Heart right ventricle (tissue), 16 donors: ENCODE measurements at regions of chr12 and their contacts with region 1.

Region 1: GRCh38 chr12:57005980-57006808 is at the start of gene ZBTB39:
- DNase-seq: peak; percentile 32 to 69
- ATAC-seq: peak; percentile 64 to 89 (median 74)
- H3K4me3 ChIP-seq: peak within 1 kb of the TSS; percentile 84 to 97 (median 92)
- H3K27ac ChIP-seq: peak within 1 kb of the TSS; percentile 50 to 92 (median 88)
- H3K4me1 ChIP-seq: peaks cover 0 to 33% (median 27%) of the 10 kb centered on the region in 9 donors
- H3K27me3 ChIP-seq: no peaks in the 10 kb centered on the region
- CTCF ChIP-seq: peak; percentile 24 to 75 (median 61)
- total RNA-seq, gene ZBTB39: 2.7 to 4.3 (median 3.6) TPM

Region 2: DNA sequence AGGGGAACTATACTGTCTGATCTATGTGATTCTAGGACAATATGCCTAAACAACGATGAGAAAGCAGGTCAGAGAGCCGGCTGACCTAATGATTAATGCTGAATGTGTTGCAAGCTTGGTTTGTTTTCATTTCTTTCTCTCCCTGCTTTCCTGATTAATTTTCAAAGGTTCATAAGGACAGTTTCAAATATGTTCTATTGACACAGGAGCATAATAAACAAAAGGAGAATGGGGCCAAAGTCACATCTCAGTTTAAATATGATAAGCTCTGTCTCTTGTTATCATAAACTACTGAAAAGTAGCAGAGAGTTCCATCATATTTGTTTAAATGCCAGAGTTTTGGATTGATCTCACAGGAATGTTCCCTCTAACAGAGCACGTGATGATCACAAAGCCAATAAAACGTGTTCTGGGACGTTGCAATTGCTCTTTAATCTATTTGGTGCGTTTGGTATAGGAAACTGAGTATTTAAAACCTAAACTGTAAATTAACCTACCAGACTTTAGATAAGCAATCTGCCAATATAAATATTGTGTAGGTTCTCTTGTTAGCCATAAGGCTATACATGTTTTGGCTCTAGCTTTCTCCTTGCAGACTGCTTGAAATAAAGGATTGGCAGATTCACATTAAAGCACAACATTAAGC is 246.8 kb before region 1 on chr12:
- intact Hi-C with region 1: loop called in 5 of 10 experiments (anchors 5 kb)
- DNase-seq: no peak
- ATAC-seq: no peak
- H3K4me3 ChIP-seq: no peak overlapping the region
- H3K27ac ChIP-seq: no peak overlapping the region
- H3K4me1 ChIP-seq: no peaks in the 10 kb centered on the region
- H3K27me3 ChIP-seq: no peaks in the 10 kb centered on the region
- CTCF ChIP-seq: no peak

Region 3: DNA sequence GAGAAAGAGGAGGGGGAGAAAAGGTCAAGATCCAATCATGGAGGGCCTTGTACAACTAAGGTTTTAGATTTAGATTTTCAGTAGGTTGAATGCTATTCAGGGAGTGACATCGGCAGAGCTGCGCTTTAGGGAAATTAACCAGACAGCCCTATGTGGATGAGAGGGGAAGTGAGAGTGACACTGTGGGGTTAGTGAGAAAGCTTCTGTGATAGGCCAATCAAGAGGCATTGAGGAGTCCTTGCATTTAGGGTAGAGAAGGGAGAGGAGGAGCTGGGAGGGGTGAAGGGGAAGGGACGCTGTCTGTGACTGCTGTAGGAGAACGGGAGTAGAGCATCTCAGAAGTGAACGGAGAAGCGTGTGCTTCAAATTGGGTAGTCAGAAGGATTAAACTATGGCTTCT is 239.7 kb before region 1 on chr12:
- intact Hi-C with region 1: loop called in 1 of 10 experiments (anchors 5 kb)
- DNase-seq: no peak
- ATAC-seq: peak in 2 of 8 donors; percentile 39 to 74
- H3K4me3 ChIP-seq: no peak overlapping the region
- H3K27ac ChIP-seq: no peak overlapping the region
- H3K4me1 ChIP-seq: no peaks in the 10 kb centered on the region
- H3K27me3 ChIP-seq: no peaks in the 10 kb centered on the region
- CTCF ChIP-seq: no peak

Region 4: DNA sequence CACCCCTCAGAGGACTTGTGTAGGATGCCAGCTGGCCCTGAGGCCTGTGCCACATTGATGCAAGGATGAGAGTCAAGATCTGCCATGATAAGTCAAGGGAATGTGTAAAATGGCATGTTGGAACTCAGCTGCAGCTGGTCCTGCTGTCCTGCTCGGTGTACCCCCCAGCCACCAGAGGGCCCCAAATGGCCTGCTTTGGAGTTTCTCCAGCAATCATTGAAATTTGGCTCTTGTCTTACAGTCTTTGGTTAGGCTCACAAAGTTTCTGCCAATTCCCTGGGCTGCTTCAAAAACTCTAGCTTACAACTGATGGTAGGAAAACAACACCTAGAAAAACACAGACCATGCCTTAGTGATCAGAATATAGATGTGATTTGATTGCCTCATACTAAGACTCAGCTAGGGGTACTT is 166.3 kb before region 1 on chr12:
- intact Hi-C with region 1: loop called in 2 of 10 experiments (anchors 5 to 10 kb)
- DNase-seq: peak; percentile 29 to 38
- ATAC-seq: peak in 5 of 8 donors; percentile 41 to 58 (median 52)
- H3K4me3 ChIP-seq: no peak overlapping the region
- H3K27ac ChIP-seq: peak overlapping the region in 1 of 10 donors; percentile 54
- H3K4me1 ChIP-seq: peaks cover 0 to 34% (median 17%) of the 10 kb centered on the region in 9 donors
- H3K27me3 ChIP-seq: no peaks in the 10 kb centered on the region
- CTCF ChIP-seq: peak in 7 of 9 donors; percentile 35 to 61 (median 50)

Region 5: GRCh38 chr12:56947633-56948456 is 58.3 kb before region 1 on chr12:
- intact Hi-C with region 1: loop called in 1 of 10 experiments (anchors 5 kb)
- DNase-seq: no peak
- ATAC-seq: no peak
- H3K4me3 ChIP-seq: no peak overlapping the region
- H3K27ac ChIP-seq: no peak overlapping the region
- H3K4me1 ChIP-seq: no peaks in the 10 kb centered on the region
- H3K27me3 ChIP-seq: no peaks in the 10 kb centered on the region
- CTCF ChIP-seq: peak in 6 of 9 donors; percentile 7 to 46 (median 34)

Region 6: GRCh38 chr12:57063991-57064685 is 57.9 kb after region 1 on chr12:
- intact Hi-C with region 1: loop called in 7 of 10 experiments (anchors 5 kb)
- DNase-seq: no peak
- ATAC-seq: no peak
- H3K4me3 ChIP-seq: peak overlapping the region in 1 of 10 donors; percentile 10
- H3K27ac ChIP-seq: peak overlapping the region in 1 of 10 donors; percentile 83
- H3K4me1 ChIP-seq: peaks cover 0 to 32% (median 0%) of the 10 kb centered on the region in 9 donors
- H3K27me3 ChIP-seq: no peaks in the 10 kb centered on the region
- CTCF ChIP-seq: no peak

Region 7: GRCh38 chr12:57111031-57111734 is 105.0 kb after region 1 on chr12 and contains the start of gene STAT6:
- intact Hi-C with region 1: loop called in 6 of 10 experiments (anchors 1 to 10 kb)
- DNase-seq: peak; percentile 75 to 89
- ATAC-seq: peak; percentile 73 to 88 (median 82)
- H3K4me3 ChIP-seq: peak within 1 kb of the TSS; percentile 56 to 84 (median 77)
- H3K27ac ChIP-seq: peak within 1 kb of the TSS; percentile 96 to 99 (median 98)
- H3K4me1 ChIP-seq: peaks cover 0 to 47% (median 31%) of the 10 kb centered on the region in 9 donors
- H3K27me3 ChIP-seq: no peaks in the 10 kb centered on the region
- CTCF ChIP-seq: peak in 1 of 9 donors; percentile 27
- total RNA-seq, gene STAT6: 23.3 to 72.3 (median 38.0) TPM